ENCODE measurements at regions of chr18 and their contacts with region 1.

Region 1: GRCh38 chr18:12038639-12039417 is 54.8 kb upstream of the ANKRD62 start:
- DNase-seq: peak; percentile 41
- H3K4me3 ChIP-seq: peak overlapping the region; percentile 63
- H3K27ac ChIP-seq: no peak overlapping the region
- H3K27me3 ChIP-seq: no peaks in the 10 kb centered on the region
- CTCF ChIP-seq: peak; percentile 93

Region 2: DNA sequence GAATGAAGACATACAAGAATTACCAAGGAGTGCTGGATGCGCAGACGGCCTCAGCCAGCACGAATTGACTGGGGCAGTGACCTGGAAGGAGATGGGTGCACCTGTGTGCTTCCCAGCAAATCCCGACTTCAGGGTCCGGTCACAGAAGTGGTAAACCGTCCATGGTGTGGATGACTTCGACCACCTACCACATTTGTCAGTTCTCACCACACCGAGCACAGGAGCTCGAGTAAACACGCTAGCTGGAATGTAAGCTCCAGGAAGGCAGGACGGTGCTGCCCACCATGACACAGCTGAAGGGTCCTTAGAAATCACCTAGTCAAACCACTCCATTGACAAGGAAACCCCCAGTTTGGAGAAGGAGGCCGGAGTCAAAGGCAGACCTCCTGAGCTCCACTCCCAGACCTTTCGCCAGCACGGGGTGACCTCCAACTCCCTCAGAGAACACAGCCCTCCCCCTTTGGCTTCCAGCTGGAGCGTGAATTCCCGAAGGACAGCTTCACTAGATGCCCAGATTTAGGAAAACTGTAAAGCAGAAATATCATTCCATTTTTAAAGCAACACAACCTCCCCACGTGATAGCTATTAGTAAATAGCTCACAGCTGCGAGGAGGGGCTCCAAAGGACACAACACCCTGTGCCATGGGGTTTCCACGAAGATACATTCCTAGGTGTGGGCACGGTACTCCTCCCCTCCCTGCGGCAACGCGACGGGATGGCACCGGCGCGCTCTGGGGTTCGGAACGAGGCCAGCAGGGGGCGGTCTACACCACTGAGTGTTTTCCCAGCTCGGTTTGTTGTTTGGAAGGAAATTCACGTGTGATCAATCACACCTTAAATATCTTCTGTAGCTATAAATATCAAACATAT is 383.9 kb before region 1 on chr18:
- CTCF ChIA-PET with region 1: interaction called, 22 read pairs
- POLR2A ChIA-PET with region 1: no interaction called
- DNase-seq: no peak
- H3K4me3 ChIP-seq: no peak overlapping the region
- H3K27ac ChIP-seq: no peak overlapping the region
- H3K27me3 ChIP-seq: peaks cover 4% of the 10 kb centered on the region
- CTCF ChIP-seq: peak; percentile 74

Region 3: GRCh38 chr18:11733031-11733430 is 305.8 kb before region 1 on chr18:
- CTCF ChIA-PET with region 1: interaction called, 20 read pairs
- POLR2A ChIA-PET with region 1: no interaction called
- DNase-seq: peak; percentile 15
- H3K4me3 ChIP-seq: peak overlapping the region; percentile 43
- H3K27ac ChIP-seq: no peak overlapping the region
- H3K27me3 ChIP-seq: peaks cover 19% of the 10 kb centered on the region
- CTCF ChIP-seq: peak; percentile 90

Region 4: GRCh38 chr18:11980555-11981382 is 58.1 kb before region 1 on chr18:
- CTCF ChIA-PET with region 1: interaction called, 14 read pairs
- POLR2A ChIA-PET with region 1: interaction called, 3 read pairs
- DNase-seq: peak; percentile 95
- H3K4me3 ChIP-seq: peak overlapping the region; percentile 68
- H3K27ac ChIP-seq: peak overlapping the region; percentile 87
- H3K27me3 ChIP-seq: no peaks in the 10 kb centered on the region
- CTCF ChIP-seq: peak; percentile 29; the same call in 1 of the 2 replicates

Region 5: DNA sequence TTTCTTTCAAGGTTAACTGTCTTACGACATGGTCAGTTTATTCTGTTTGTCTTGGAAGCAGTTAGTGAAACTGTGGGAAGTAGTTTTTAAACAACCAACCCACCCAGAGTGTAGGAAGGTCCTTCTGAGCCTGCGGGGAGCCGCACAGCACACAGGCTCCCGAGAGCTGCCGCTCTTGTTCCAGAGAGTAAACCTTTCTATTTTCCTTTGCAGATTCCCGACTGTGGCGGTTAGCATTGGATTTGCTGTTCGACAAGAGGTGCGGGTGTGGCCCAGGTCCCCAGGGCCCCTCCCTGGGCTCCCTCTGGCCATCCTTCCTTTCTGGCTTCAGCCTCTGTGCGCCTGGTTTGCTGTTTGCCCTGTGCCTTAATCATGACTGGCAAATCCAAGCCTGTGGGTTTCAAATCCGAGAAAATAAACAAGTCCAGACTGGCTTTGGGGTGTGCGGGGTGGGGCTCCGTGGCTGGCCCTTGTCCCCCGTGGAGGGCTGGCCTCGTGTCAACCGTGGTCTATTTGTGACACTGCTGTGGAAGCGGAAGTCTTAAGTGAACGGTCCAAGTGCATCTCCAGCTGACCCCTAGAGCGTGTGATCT is 26.8 kb before region 1 on chr18:
- CTCF ChIA-PET with region 1: interaction called, 11 read pairs
- POLR2A ChIA-PET with region 1: no interaction called
- DNase-seq: no peak
- H3K4me3 ChIP-seq: no peak overlapping the region
- H3K27ac ChIP-seq: no peak overlapping the region
- H3K27me3 ChIP-seq: no peaks in the 10 kb centered on the region
- CTCF ChIP-seq: no peak

Region 6: GRCh38 chr18:12049978-12050811 is 11.4 kb after region 1 on chr18:
- CTCF ChIA-PET with region 1: interaction called, 33 read pairs
- POLR2A ChIA-PET with region 1: no interaction called
- DNase-seq: no peak
- H3K4me3 ChIP-seq: no peak overlapping the region
- H3K27ac ChIP-seq: no peak overlapping the region
- H3K27me3 ChIP-seq: no peaks in the 10 kb centered on the region
- CTCF ChIP-seq: no peak

Region 7: GRCh38 chr18:12106471-12106870 is 67.6 kb after region 1 on chr18:
- CTCF ChIA-PET with region 1: no interaction called
- POLR2A ChIA-PET with region 1: no interaction called
- DNase-seq: no peak
- H3K4me3 ChIP-seq: no peak overlapping the region
- H3K27ac ChIP-seq: no peak overlapping the region
- H3K27me3 ChIP-seq: peaks cover 15% of the 10 kb centered on the region
- CTCF ChIP-seq: no peak

Region 8: DNA sequence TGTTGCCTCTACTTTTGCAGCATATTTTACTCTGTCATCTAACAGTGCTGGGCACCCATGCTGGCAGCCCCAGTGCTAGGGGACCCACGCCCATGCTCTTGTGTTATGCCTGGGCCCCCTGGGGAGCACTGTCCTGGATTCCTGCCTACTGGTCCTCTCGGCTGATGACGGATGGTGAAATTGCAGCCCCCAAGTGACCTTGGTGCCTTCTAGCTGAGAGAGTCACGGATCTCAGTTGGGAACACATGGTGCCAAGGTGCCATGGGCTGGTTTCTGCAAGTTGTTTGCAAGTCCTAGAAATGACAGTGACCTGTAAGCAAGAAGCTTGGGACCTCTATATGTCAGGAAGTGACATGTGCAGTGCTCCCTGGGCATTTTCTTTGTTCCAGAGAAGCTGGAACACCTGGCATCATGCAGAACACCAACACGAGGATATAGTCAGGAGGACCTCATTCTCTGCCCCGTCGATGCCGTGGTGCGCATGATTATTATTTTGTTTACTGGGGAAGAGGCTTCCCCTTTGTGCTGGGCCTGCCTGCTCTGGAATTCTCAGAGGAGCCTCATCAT is 1367.3 kb after region 1 on chr18:
- CTCF ChIA-PET with region 1: no interaction called
- POLR2A ChIA-PET with region 1: no interaction called
- DNase-seq: no peak
- H3K4me3 ChIP-seq: no peak overlapping the region
- H3K27ac ChIP-seq: no peak overlapping the region
- H3K27me3 ChIP-seq: no peaks in the 10 kb centered on the region
- CTCF ChIP-seq: no peak

Measured in AG04450 (cell line).